ENCODE measurements at regions of chr5 and their contacts with region 1.

Region 1: GRCh38 chr5:38404667-38405276 is 146.4 kb downstream of the EGFLAM start:
- DNase-seq: peak; percentile 46
- H3K4me3 ChIP-seq: no peak overlapping the region
- H3K4me3 Mint-ChIP-seq: no peak overlapping the region
- H3K27ac Mint-ChIP-seq: no peak overlapping the region
- H3K4me1 ChIP-seq: no peaks in the 10 kb centered on the region
- H3K4me1 Mint-ChIP-seq: no peaks in the 10 kb centered on the region
- H3K27me3 ChIP-seq: peaks cover 1% of the 10 kb centered on the region; the same call in 1 of the 2 replicates
- H3K27me3 Mint-ChIP-seq: peaks cover 43% of the 10 kb centered on the region
- CTCF ChIP-seq: peak; percentile 52 to 68

Region 2: DNA sequence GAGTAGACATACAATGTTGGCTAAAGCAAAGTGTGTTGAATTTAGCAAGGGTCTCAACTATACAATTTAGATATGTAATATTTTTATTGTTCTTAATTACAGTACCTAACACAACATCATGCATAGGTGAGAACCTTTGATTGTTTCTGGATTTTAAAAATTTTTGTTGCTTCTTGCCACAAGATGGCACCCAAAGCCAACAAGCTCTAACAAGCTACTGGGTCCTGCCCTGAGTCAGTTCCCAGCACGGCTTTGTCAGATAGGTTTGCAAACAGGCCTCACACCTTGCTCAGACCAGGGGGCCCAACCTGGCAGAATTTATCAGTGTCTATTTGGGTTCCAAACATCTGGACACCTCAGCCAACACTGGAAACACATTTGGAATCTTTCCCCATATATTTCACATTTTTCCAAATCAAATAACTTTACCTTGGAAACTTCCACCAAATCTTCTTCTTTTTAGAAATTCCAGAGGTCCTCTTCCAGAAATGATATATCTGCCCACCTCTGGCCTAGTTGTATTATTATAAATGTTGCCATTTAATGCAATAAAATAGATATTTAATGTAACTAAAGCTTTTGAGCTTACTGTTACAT is 195.9 kb before region 1 on chr5:
- CTCF ChIA-PET with region 1: no interaction called
- POLR2A ChIA-PET with region 1: no interaction called
- intact Hi-C with region 1: loop called (anchors 1 kb)
- DNase-seq: peak; percentile 44 to 50
- H3K4me3 ChIP-seq: no peak overlapping the region
- H3K4me3 Mint-ChIP-seq: no peak overlapping the region
- H3K27ac Mint-ChIP-seq: no peak overlapping the region
- H3K4me1 ChIP-seq: no peaks in the 10 kb centered on the region
- H3K4me1 Mint-ChIP-seq: peaks cover 7% of the 10 kb centered on the region
- H3K27me3 ChIP-seq: no peaks in the 10 kb centered on the region
- H3K27me3 Mint-ChIP-seq: peaks cover 10% of the 10 kb centered on the region
- CTCF ChIP-seq: peak; percentile 51 to 57

Region 3: DNA sequence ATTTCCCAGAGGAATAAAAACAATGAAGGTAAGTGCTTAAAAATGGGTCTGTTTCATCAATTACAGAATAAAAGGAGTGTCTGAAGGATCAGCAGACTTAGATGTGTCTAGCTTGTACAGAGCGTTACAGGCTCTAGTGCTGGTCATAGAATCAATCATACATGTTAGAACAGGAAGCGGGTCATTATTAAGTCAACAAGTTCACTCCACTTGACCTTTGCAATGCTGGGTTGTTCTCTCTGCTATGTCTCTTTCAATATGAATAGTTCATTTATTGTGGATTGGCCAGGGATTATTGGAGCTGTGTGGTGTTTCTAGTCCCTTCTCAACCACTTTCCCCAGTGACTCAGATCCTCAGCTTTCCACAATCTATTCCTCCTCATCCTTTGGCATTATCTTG is 167.1 kb before region 1 on chr5:
- CTCF ChIA-PET with region 1: no interaction called
- POLR2A ChIA-PET with region 1: no interaction called
- intact Hi-C with region 1: no loop called
- DNase-seq: no peak
- H3K4me3 ChIP-seq: no peak overlapping the region
- H3K4me3 Mint-ChIP-seq: no peak overlapping the region
- H3K27ac Mint-ChIP-seq: no peak overlapping the region
- H3K4me1 ChIP-seq: no peaks in the 10 kb centered on the region
- H3K4me1 Mint-ChIP-seq: no peaks in the 10 kb centered on the region
- H3K27me3 ChIP-seq: no peaks in the 10 kb centered on the region; the same call in 1 of the 2 replicates
- H3K27me3 Mint-ChIP-seq: peaks cover 11% of the 10 kb centered on the region
- CTCF ChIP-seq: no peak

Region 4: DNA sequence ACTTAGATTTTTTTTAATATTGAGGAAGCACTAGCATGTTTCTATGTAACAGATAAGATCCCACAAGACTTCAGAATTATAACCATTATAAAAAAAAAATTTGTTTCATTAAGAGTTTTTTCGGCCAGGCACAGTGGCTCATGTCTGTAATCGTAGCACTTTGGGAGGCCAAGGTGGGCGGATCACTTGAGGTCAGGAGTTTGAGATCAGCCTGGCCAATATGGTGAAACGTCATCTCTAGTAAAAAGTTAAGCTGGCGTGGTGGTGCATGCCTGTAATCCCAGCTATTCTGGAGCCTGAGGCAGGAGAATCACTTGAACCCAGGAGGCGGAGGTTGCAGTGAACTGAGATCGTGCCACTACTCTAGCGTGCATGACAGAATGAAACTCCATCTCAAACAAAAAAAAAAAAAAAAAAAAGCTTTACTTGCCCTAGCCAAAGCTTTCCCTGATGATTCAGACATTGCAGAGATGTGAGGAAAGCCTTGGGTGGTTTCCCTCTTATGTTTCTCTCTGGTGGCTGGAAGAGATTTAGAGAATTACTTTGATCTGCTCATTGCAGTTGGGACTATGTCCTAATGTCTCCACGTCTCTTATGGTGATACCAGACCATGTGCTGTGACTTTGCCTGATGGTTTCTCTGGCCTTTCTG is 81.0 kb before region 1 on chr5:
- CTCF ChIA-PET with region 1: no interaction called
- POLR2A ChIA-PET with region 1: no interaction called
- intact Hi-C with region 1: no loop called
- DNase-seq: no peak
- H3K4me3 ChIP-seq: no peak overlapping the region
- H3K4me3 Mint-ChIP-seq: no peak overlapping the region
- H3K27ac Mint-ChIP-seq: no peak overlapping the region
- H3K4me1 ChIP-seq: no peaks in the 10 kb centered on the region
- H3K4me1 Mint-ChIP-seq: no peaks in the 10 kb centered on the region
- H3K27me3 ChIP-seq: no peaks in the 10 kb centered on the region
- H3K27me3 Mint-ChIP-seq: peaks cover 11% of the 10 kb centered on the region
- CTCF ChIP-seq: no peak

Region 5: GRCh38 chr5:38382898-38383297 is 21.9 kb before region 1 on chr5:
- CTCF ChIA-PET with region 1: no interaction called
- POLR2A ChIA-PET with region 1: no interaction called
- intact Hi-C with region 1: loop called (anchors 1 kb)
- DNase-seq: peak; percentile 81 to 83
- H3K4me3 ChIP-seq: no peak overlapping the region
- H3K4me3 Mint-ChIP-seq: no peak overlapping the region
- H3K27ac Mint-ChIP-seq: no peak overlapping the region
- H3K4me1 ChIP-seq: no peaks in the 10 kb centered on the region
- H3K4me1 Mint-ChIP-seq: peaks cover 8% of the 10 kb centered on the region
- H3K27me3 ChIP-seq: no peaks in the 10 kb centered on the region
- H3K27me3 Mint-ChIP-seq: peaks cover 5% of the 10 kb centered on the region
- CTCF ChIP-seq: peak; percentile 70 to 84

Region 6: DNA sequence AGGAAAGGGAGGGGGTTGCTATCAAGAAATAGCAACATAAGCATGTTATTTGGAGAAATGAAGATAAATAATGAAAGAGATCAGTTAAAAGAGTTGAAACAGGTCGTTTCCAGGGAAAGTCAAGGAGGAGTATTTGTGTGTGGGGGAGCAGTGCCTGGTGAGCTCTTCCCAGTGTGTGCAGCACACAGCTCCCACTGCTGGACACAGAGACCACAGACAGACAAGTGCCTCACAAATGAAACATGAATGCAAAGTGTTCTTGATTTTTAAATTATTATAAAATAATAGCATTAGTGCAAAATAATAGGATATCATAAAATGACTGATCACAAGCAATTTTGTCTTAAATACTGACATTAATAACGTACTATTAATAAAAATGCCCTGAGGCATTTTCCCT is 110.9 kb after region 1 on chr5:
- CTCF ChIA-PET with region 1: no interaction called
- POLR2A ChIA-PET with region 1: no interaction called
- intact Hi-C with region 1: no loop called
- DNase-seq: peak in 1 of 2 experiments; percentile 17
- H3K4me3 ChIP-seq: no peak overlapping the region
- H3K4me3 Mint-ChIP-seq: no peak overlapping the region
- H3K27ac Mint-ChIP-seq: no peak overlapping the region
- H3K4me1 ChIP-seq: no peaks in the 10 kb centered on the region
- H3K4me1 Mint-ChIP-seq: no peaks in the 10 kb centered on the region
- H3K27me3 ChIP-seq: no peaks in the 10 kb centered on the region
- H3K27me3 Mint-ChIP-seq: no peaks in the 10 kb centered on the region
- CTCF ChIP-seq: peak; percentile 29 to 67

Measured in Caco-2 (cell line).